Activated CD4-positive, alpha-beta T cell treated with anti-CD3 and anti-CD28 coated beads for 36 hours (primary cell): ENCODE measurements at regions of chr17 and their contacts with region 1.

Region 1: DNA sequence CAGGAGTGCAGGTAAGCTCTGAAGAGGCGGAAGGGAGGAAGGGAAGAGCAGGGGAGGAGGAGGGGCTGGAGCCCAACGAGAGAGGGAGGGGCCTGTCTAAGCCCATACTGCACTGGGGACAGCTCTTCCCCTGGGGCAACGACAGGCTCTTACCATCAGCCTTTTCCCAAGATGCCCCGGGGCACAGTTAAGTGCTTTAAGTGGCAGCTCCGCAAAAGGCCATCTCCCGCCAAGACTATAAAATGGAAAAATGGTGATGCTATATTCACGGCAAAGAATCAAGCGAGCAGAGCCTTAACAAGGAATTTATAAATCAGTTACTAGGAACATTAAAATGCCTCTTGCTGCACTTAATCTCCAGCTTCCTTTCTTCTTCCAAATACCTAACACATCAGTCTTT is 110.2 kb upstream of the NLRP1 start:
- DNase-seq: no peak
- ATAC-seq: no peak
- H3K4me3 Mint-ChIP-seq: no peak overlapping the region
- H3K27ac Mint-ChIP-seq: no peak overlapping the region
- H3K4me1 Mint-ChIP-seq: no peaks in the 10 kb centered on the region
- H3K27me3 Mint-ChIP-seq: peaks cover 8% of the 10 kb centered on the region

Region 2: GRCh38 chr17:5630434-5630833 is 64.1 kb before region 1 on chr17:
- CTCF ChIA-PET with region 1: interaction called, 3 read pairs
- POLR2A ChIA-PET with region 1: no interaction called
- intact Hi-C with region 1: loop called in 1 of 2 experiments (anchors 10 kb)
- DNase-seq: no peak
- ATAC-seq: no peak
- H3K4me3 Mint-ChIP-seq: no peak overlapping the region
- H3K27ac Mint-ChIP-seq: no peak overlapping the region
- H3K4me1 Mint-ChIP-seq: no peaks in the 10 kb centered on the region
- H3K27me3 Mint-ChIP-seq: peaks cover 27% of the 10 kb centered on the region